HCT116 (cell line): ENCODE measurements at regions of chr3 and their contacts with region 1.

Region 1: GRCh38 chr3:119279101-119279554 is 15.1 kb upstream of the ARHGAP31 start:
- DNase-seq: no peak
- ATAC-seq: peak; percentile 46
- H3K4me3 ChIP-seq: no peak overlapping the region
- H3K27ac ChIP-seq: no peak overlapping the region
- H3K4me1 ChIP-seq: no peaks in the 10 kb centered on the region
- H3K27me3 ChIP-seq: no peaks in the 10 kb centered on the region
- CTCF ChIP-seq: no peak
- POLR2A ChIP-seq: no peak
- RAD21 ChIP-seq: no peak

Region 2: GRCh38 chr3:118991775-118992174 is 287.4 kb before region 1 on chr3:
- CTCF ChIA-PET with region 1: no interaction called
- POLR2A ChIA-PET with region 1: no interaction called
- RAD21 ChIA-PET with region 1: no interaction called
- intact Hi-C with region 1: no loop called
- DNase-seq: no peak
- ATAC-seq: no peak
- H3K4me3 ChIP-seq: no peak overlapping the region
- H3K27ac ChIP-seq: no peak overlapping the region
- H3K4me1 ChIP-seq: no peaks in the 10 kb centered on the region
- H3K27me3 ChIP-seq: peaks cover 63% of the 10 kb centered on the region
- CTCF ChIP-seq: no peak
- POLR2A ChIP-seq: no peak
- RAD21 ChIP-seq: no peak

Region 3: DNA sequence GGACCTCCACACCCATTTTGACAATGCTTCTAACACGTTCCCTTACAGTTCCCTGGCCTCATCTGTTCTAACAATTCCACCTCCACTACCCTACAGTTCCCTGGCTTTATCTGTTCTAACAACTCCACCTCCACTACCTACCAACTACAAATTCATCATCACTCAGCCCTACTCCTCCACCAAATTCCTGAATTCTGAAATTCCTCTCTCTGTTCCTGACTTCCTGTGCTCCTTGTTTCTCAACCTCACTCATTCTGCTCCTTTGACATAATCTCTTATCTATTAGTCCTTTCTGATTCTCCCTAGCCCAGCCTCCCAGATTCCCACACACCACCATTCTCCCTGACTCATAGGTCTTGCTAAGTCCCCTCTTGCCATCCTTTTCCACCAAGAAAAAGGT is 83.2 kb before region 1 on chr3:
- CTCF ChIA-PET with region 1: no interaction called
- POLR2A ChIA-PET with region 1: no interaction called
- RAD21 ChIA-PET with region 1: no interaction called
- intact Hi-C with region 1: no loop called
- DNase-seq: no peak
- ATAC-seq: no peak
- H3K4me3 ChIP-seq: no peak overlapping the region
- H3K27ac ChIP-seq: no peak overlapping the region
- H3K4me1 ChIP-seq: no peaks in the 10 kb centered on the region
- H3K27me3 ChIP-seq: peaks cover 6% of the 10 kb centered on the region
- CTCF ChIP-seq: no peak
- POLR2A ChIP-seq: no peak
- RAD21 ChIP-seq: no peak

Region 4: DNA sequence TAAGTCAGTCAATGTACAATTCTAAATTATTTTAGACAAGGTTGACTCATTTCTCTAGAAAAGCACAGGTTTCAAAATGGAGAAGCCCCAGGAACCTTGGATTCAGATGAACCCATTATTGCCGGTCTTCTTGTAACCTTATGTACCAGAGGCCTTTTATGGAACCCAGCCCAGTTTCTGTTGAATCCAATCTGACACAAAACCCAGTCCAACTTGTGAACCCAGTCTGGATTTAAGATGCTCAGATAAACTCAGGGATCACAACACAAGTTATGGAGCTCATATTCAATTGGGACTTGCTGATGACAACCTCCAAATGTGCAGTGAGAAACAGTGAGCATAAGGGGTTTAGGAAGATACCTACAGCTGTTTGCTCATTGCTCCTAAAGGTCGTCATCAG is 22.0 kb before region 1 on chr3:
- CTCF ChIA-PET with region 1: no interaction called
- POLR2A ChIA-PET with region 1: no interaction called
- RAD21 ChIA-PET with region 1: no interaction called
- intact Hi-C with region 1: no loop called
- DNase-seq: no peak
- ATAC-seq: no peak
- H3K4me3 ChIP-seq: no peak overlapping the region
- H3K27ac ChIP-seq: no peak overlapping the region
- H3K4me1 ChIP-seq: peaks cover 0 to 8% of the 10 kb centered on the region in 2 experiments; a peak in 1 of 4 replicates
- H3K27me3 ChIP-seq: no peaks in the 10 kb centered on the region
- CTCF ChIP-seq: no peak
- POLR2A ChIP-seq: no peak
- RAD21 ChIP-seq: no peak

Region 5: GRCh38 chr3:119352849-119353502 is 73.8 kb after region 1 on chr3:
- CTCF ChIA-PET with region 1: interaction called, 5 read pairs
- POLR2A ChIA-PET with region 1: no interaction called
- RAD21 ChIA-PET with region 1: interaction called in 1 of 2 experiments, 3 read pairs
- intact Hi-C with region 1: loop called (anchors 1 kb)
- DNase-seq: peak; percentile 8
- ATAC-seq: peak; percentile 79
- H3K4me3 ChIP-seq: no peak overlapping the region
- H3K27ac ChIP-seq: no peak overlapping the region
- H3K4me1 ChIP-seq: no peaks in the 10 kb centered on the region
- H3K27me3 ChIP-seq: 0 out of 2 replicates have a peak, but pooled peaks cover 7% of the 10 kb centered on the region
- CTCF ChIP-seq: peak; percentile 21 to 43 (median 37); a peak in 4 of 6 replicates
- POLR2A ChIP-seq: no peak
- RAD21 ChIP-seq: peak; percentile 58

Region 6: GRCh38 chr3:119508172-119508845 is 229.2 kb after region 1 on chr3:
- CTCF ChIA-PET with region 1: no interaction called
- POLR2A ChIA-PET with region 1: no interaction called
- RAD21 ChIA-PET with region 1: no interaction called
- intact Hi-C with region 1: no loop called
- DNase-seq: no peak
- ATAC-seq: no peak
- H3K4me3 ChIP-seq: no peak overlapping the region
- H3K27ac ChIP-seq: no peak overlapping the region
- H3K4me1 ChIP-seq: no peaks in the 10 kb centered on the region
- H3K27me3 ChIP-seq: no peaks in the 10 kb centered on the region
- CTCF ChIP-seq: no peak
- POLR2A ChIP-seq: no peak
- RAD21 ChIP-seq: no peak

Region 7: GRCh38 chr3:119559441-119559963 is 280.4 kb after region 1 on chr3 and contains the start of gene CD80:
- CTCF ChIA-PET with region 1: no interaction called
- POLR2A ChIA-PET with region 1: no interaction called
- RAD21 ChIA-PET with region 1: no interaction called
- intact Hi-C with region 1: loop called (anchors 1 kb)
- DNase-seq: peak; percentile 65
- ATAC-seq: peak; percentile 99
- H3K4me3 ChIP-seq: no peak within 1 kb of the TSS
- H3K27ac ChIP-seq: no peak within 1 kb of the TSS
- H3K4me1 ChIP-seq: peaks cover 0 to 5% of the 10 kb centered on the region in 2 experiments; a peak in 1 of 4 replicates
- H3K27me3 ChIP-seq: no peaks in the 10 kb centered on the region
- CTCF ChIP-seq: peak; percentile 36 to 52 (median 43); a peak in 3 of 6 replicates
- POLR2A ChIP-seq: no peak
- RAD21 ChIP-seq: peak; percentile 64
- total RNA-seq, gene CD80: not detected